ENCODE measurements at regions of chr2 and their contacts with region 1.

Region 1: DNA sequence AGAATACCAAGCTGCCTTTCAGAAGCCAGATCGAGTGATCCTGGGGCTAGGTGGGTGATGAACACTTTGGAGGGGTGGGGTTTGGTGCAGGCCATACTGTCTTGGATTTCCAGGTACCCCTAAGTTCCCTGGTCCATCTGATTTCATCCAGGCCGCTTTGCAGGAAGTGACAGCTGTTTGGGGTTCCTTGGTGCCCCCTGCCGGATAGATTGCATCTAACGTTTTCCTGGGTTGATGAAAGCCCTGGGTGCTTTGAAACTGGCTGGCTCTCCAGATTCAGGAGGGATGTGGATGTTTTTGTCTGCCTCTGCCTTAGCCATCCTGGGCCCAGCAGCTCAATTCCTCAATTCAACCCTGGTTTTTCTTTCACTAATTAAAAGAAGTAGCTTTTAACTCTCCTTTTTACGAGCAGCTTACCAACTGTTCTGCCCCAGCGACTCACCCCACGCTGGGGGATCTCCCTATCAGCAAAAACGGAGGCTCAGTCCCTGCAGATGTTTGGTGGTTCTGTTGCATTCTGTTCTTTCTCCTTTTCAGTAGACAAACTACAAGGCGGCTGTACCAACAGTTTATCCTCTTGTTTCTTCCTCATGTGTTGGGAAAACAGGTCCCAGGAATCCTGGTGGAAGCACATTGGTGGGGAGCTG is 37.1 kb downstream of the ARHGEF4 start:
- DNase-seq: peak; percentile 55 to 67 (median 63)
- H3K4me3 ChIP-seq: no peak overlapping the region
- H3K4me3 Mint-ChIP-seq: no peak overlapping the region
- H3K27ac ChIP-seq: no peak overlapping the region
- H3K27ac Mint-ChIP-seq: no peak overlapping the region
- H3K4me1 ChIP-seq: no peaks in the 10 kb centered on the region
- H3K4me1 Mint-ChIP-seq: no peaks in the 10 kb centered on the region
- H3K27me3 ChIP-seq: no peaks in the 10 kb centered on the region
- H3K27me3 Mint-ChIP-seq: peaks cover 5 to 7% of the 10 kb centered on the region in 2 donors

Region 2: GRCh38 chr2:129820908-129821307 is 1052.9 kb before region 1 on chr2:
- CTCF ChIA-PET with region 1: no interaction called
- POLR2A ChIA-PET with region 1: no interaction called
- intact Hi-C with region 1: no loop called
- DNase-seq: no peak
- H3K4me3 ChIP-seq: no peak overlapping the region
- H3K4me3 Mint-ChIP-seq: no peak overlapping the region
- H3K27ac ChIP-seq: no peak overlapping the region
- H3K27ac Mint-ChIP-seq: no peak overlapping the region
- H3K4me1 ChIP-seq: no peaks in the 10 kb centered on the region
- H3K4me1 Mint-ChIP-seq: no peaks in the 10 kb centered on the region
- H3K27me3 ChIP-seq: no peaks in the 10 kb centered on the region
- H3K27me3 Mint-ChIP-seq: no peaks in the 10 kb centered on the region

Region 3: GRCh38 chr2:130824492-130825061 is 49.2 kb before region 1 on chr2:
- CTCF ChIA-PET with region 1: interaction called, 13 read pairs
- POLR2A ChIA-PET with region 1: interaction called, 3 read pairs
- intact Hi-C with region 1: loop called (anchors 1 kb)
- DNase-seq: peak; percentile 77 to 95 (median 84)
- H3K4me3 ChIP-seq: peak overlapping the region in 1 of 2 donors; percentile 42
- H3K4me3 Mint-ChIP-seq: peak overlapping the region; percentile 20 to 72 (median 34)
- H3K27ac ChIP-seq: peak overlapping the region; percentile 27
- H3K27ac Mint-ChIP-seq: peak overlapping the region; percentile 86 to 98 (median 94)
- H3K4me1 ChIP-seq: peaks cover 20% of the 10 kb centered on the region
- H3K4me1 Mint-ChIP-seq: peaks cover 11 to 35% (median 19%) of the 10 kb centered on the region in 4 donors
- H3K27me3 ChIP-seq: no peaks in the 10 kb centered on the region
- H3K27me3 Mint-ChIP-seq: no peaks in the 10 kb centered on the region

Region 4: GRCh38 chr2:130884503-130884902 is 10.7 kb after region 1 on chr2:
- CTCF ChIA-PET with region 1: interaction called, 22 read pairs
- POLR2A ChIA-PET with region 1: no interaction called
- intact Hi-C with region 1: no loop called
- DNase-seq: no peak
- H3K4me3 ChIP-seq: no peak overlapping the region
- H3K4me3 Mint-ChIP-seq: no peak overlapping the region
- H3K27ac ChIP-seq: no peak overlapping the region
- H3K27ac Mint-ChIP-seq: no peak overlapping the region
- H3K4me1 ChIP-seq: no peaks in the 10 kb centered on the region
- H3K4me1 Mint-ChIP-seq: no peaks in the 10 kb centered on the region
- H3K27me3 ChIP-seq: no peaks in the 10 kb centered on the region
- H3K27me3 Mint-ChIP-seq: peaks cover 2 to 10% of the 10 kb centered on the region in 2 donors

Region 5: DNA sequence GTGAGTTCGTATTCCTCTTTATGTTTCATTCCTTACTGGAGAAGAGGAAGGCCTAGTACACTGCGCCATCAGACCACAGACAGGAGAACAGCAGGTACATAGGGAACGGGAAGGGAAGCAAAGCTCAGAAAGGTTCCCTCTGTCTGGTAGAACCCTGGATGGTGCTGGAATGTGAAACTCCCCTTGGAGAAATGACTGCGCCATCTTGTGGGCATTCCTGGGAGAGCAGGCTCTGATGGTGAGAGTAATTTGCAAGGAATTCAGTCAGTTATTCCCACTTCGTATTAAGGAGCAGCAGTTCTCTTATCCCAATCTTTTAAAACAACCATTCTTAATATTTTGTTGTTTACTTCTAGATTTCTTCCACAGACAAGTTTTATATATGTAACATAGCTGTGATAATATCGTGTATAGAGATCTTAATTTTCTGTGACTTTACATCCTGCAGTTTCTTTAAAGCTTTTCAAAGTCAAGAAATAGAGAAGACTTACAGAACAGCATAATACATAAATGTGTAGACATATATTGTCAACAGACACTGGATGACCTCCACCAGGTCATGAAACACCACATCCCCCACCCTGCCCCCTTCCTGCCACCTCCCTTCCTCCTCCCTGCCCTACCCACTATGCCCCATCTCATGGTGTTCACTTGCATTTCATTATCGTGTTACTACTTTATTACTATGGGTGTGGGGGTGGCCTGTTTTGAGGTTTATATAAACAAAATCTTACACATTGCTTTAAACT is 46.8 kb after region 1 on chr2:
- CTCF ChIA-PET with region 1: no interaction called
- POLR2A ChIA-PET with region 1: no interaction called
- intact Hi-C with region 1: loop called (anchors 1 kb)
- DNase-seq: peak in 4 of 5 donors; percentile 24 to 43 (median 30)
- H3K4me3 ChIP-seq: no peak overlapping the region
- H3K4me3 Mint-ChIP-seq: no peak overlapping the region
- H3K27ac ChIP-seq: no peak overlapping the region
- H3K27ac Mint-ChIP-seq: no peak overlapping the region
- H3K4me1 ChIP-seq: no peaks in the 10 kb centered on the region
- H3K4me1 Mint-ChIP-seq: no peaks in the 10 kb centered on the region
- H3K27me3 ChIP-seq: no peaks in the 10 kb centered on the region
- H3K27me3 Mint-ChIP-seq: peaks cover 4 to 7% of the 10 kb centered on the region in 2 donors

Measured in CD4-positive, alpha-beta memory T cell (primary cell).